Mammary epithelial cell (primary cell): ENCODE measurements at regions of chr7 and their contacts with region 1.

Region 1: GRCh38 chr7:13990984-13991790 is 1.7 kb upstream of the ETV1 start:
- DNase-seq: peak; percentile 98
- H3K4me3 ChIP-seq: peak overlapping the region; percentile 81 to 90 (median 87)
- H3K27ac ChIP-seq: peak overlapping the region; percentile 94
- H3K4me1 ChIP-seq: peaks cover 19% of the 10 kb centered on the region
- H3K27me3 ChIP-seq: no peaks in the 10 kb centered on the region
- CTCF ChIP-seq: no peak

Region 2: GRCh38 chr7:13742811-13743210 is 248.4 kb before region 1 on chr7:
- CTCF ChIA-PET with region 1: interaction called, 4 read pairs
- dilution Hi-C with region 1: no loop called
- in situ Hi-C with region 1: no loop called
- intact Hi-C with region 1: loop called (anchors 2 kb)
- DNase-seq: peak; percentile 33
- H3K4me3 ChIP-seq: no peak overlapping the region
- H3K27ac ChIP-seq: no peak overlapping the region
- H3K4me1 ChIP-seq: peaks cover 6% of the 10 kb centered on the region
- H3K27me3 ChIP-seq: no peaks in the 10 kb centered on the region
- CTCF ChIP-seq: peak; percentile 39 to 64

Region 3: DNA sequence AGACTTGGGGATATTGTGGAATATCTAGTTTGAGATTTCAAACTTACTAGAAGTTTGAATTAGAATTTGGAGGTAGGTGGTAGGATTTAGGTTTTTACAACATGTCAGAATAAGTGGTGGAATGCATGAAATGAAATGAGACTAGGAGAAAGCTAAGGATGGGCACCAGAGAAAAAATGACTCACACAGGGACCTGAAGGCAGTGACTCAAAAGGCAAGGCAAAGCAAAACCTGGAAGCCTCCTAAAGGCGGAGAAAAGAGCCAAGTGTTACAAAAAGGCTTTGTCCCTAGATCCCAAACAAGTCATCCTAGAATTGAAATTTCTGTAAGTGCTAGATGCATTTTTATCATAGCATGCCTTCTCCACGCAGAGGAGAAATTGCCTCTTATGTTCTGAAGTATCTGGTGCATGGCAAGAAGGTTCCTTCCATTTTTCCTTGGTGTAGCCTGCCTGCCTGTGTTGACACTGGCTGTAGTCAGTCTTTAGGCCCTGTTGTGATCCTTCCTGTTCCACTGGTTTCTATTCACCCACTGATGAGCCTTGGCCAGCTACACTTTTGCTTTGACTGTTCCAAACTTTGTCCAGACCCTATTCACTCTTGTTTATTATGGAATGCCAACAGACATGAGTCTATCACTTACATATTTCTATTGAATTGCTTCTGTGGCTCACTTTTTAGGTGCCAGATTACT is 111.0 kb before region 1 on chr7:
- CTCF ChIA-PET with region 1: no interaction called
- dilution Hi-C with region 1: no loop called
- in situ Hi-C with region 1: no loop called
- intact Hi-C with region 1: loop called (anchors 2 kb)
- DNase-seq: peak; percentile 87
- H3K4me3 ChIP-seq: peak overlapping the region in 2 of 3 experiments; percentile 7 to 19
- H3K27ac ChIP-seq: peak overlapping the region; percentile 77
- H3K4me1 ChIP-seq: peaks cover 15% of the 10 kb centered on the region
- H3K27me3 ChIP-seq: no peaks in the 10 kb centered on the region
- CTCF ChIP-seq: no peak

Region 4: DNA sequence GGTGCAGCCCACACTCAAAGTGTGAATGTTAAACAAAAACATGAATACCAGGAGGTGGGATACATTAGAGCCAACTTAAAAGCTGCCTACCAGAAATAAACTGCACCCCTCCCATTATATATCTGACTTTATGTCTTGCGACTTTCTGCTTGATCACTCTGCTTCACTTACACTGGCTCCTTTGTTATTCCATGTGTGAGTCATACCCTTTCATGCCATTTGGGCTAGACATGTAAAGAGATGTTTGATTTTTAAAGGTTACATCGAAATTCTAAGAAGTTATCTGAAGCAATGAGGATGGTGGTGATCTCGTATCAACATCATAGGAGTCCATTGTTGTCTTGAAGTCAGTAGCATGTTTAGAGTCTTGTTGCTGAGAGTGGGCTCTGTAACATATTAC is 29.9 kb after region 1 on chr7:
- CTCF ChIA-PET with region 1: interaction called, 14 read pairs
- dilution Hi-C with region 1: no loop called
- in situ Hi-C with region 1: no loop called
- intact Hi-C with region 1: no loop called
- DNase-seq: peak; percentile 78
- H3K4me3 ChIP-seq: peak overlapping the region in 1 of 3 experiments; percentile 6
- H3K27ac ChIP-seq: peak overlapping the region; percentile 48
- H3K4me1 ChIP-seq: peaks cover 13% of the 10 kb centered on the region
- H3K27me3 ChIP-seq: no peaks in the 10 kb centered on the region
- CTCF ChIP-seq: no peak